Activated CD4-positive, alpha-beta memory T cell treated with anti-CD3 and anti-CD28 coated beads for 36 hours (primary cell): ENCODE measurements at regions of chr22 and their contacts with region 1.

Region 1: DNA sequence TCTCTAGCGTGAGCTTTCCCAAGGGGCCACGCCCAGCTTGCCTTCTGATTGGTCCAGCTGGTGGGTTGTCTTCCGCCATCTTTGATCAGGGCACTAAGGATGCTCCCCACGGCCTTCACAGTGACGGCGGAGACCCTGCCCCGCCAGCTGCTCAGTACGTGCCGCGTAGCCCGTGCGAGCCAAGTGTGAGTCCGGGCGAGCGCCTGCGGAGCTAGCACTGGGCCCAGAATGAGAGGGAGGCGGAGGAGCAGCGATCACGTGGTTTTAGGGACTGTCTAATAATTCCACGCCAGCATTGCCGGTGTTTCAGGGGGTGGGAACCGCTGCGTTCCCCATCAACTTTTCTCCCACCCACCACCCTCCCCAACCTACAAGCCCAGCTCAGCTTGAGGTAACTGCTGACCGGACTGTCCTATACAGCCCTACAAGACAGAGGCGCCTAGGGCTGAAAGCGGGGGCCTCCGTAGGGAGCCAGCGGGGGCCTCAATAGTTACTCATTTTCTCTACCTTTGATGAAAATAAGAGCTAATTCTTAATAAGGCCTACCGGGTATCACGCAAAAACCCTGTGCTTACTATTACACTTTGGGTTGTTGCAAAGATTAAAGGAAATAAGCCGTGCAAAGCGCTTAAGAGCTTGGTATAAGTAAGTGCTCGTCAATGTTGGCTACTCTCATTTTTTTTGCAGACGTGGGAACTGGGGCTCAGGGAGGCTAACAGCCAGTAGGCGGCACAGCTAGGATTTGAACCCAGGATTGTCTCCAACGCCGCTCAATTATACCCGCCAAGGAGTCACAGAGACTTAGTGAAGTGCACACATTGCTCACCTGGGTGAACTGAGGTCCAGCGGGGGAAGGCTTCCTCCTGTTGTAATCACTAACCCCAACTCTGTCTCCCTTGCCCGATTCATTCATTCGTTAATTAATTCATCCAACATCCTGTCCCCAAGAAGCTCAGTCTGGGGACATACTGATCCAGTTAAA is 1.3 kb upstream of the MTFP1 start:
- DNase-seq: peak; percentile 99
- H3K4me3 Mint-ChIP-seq: peak overlapping the region; percentile 90
- H3K27ac Mint-ChIP-seq: peak overlapping the region; percentile 95
- H3K4me1 Mint-ChIP-seq: peaks cover 58% of the 10 kb centered on the region
- H3K27me3 Mint-ChIP-seq: no peaks in the 10 kb centered on the region

Region 2: GRCh38 chr22:30159561-30160353 is 264.5 kb before region 1 on chr22:
- CTCF ChIA-PET with region 1: no interaction called
- POLR2A ChIA-PET with region 1: no interaction called
- intact Hi-C with region 1: loop called (anchors 10 kb)
- DNase-seq: no peak
- H3K4me3 Mint-ChIP-seq: no peak overlapping the region
- H3K27ac Mint-ChIP-seq: peak overlapping the region; percentile 85
- H3K4me1 Mint-ChIP-seq: peaks cover 58% of the 10 kb centered on the region
- H3K27me3 Mint-ChIP-seq: no peaks in the 10 kb centered on the region

Region 3: GRCh38 chr22:30348809-30349208 is 75.5 kb before region 1 on chr22:
- CTCF ChIA-PET with region 1: interaction called, 3 read pairs
- POLR2A ChIA-PET with region 1: interaction called, 4 read pairs
- intact Hi-C with region 1: loop called (anchors 5 kb)
- DNase-seq: no peak
- H3K4me3 Mint-ChIP-seq: peak overlapping the region; percentile 44
- H3K27ac Mint-ChIP-seq: peak overlapping the region; percentile 89
- H3K4me1 Mint-ChIP-seq: peaks cover 89% of the 10 kb centered on the region
- H3K27me3 Mint-ChIP-seq: no peaks in the 10 kb centered on the region

Region 4: DNA sequence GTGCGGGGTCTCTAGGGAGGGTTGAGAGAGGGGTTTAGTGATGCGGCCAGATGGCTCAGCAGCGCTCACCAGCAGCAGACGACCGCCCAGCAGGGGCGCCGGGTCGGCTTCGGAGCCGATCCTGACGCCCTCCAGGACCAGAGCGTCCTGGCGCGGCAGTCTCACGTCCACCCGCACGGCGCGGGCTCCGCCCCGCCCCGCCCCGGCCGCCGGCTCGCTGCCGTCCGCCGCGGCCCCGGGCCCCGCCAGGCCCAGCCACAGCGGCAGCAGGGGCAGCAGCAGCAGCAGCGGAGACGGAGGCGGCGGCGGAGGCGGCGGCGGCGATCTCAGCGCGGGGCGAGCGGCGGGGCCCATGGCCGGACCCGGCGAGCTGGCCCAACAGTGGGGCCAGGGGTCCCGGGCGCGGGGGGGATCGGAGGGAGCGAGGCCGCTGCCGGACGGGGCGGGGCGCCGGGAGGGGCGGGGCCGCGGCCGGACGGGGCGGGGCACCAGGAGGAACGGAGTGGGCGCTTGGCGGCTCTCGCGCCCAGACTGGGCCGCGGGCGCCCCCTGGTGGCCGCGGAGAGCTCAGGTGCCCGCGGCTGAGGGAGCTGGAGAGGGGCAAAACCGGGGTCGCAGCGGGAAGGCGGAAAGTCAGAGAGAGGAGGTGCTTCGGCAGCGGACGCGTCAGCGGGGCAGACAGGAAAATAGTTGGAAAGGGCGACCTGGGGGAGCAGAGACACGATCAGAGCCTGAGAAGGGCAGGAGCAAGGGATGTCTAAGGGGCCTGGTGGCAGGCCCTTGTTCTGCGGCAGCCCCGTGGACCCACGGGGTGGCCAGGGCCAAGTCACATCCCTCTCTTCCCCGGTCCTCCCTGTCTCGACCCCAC is 37.1 kb before region 1 on chr22 and contains the start of gene RNF215:
- CTCF ChIA-PET with region 1: interaction called, 113 read pairs
- POLR2A ChIA-PET with region 1: interaction called, 10 read pairs
- intact Hi-C with region 1: loop called (anchors 1 kb)
- DNase-seq: peak; percentile 84
- H3K4me3 Mint-ChIP-seq: peak within 1 kb of the TSS; percentile 80
- H3K27ac Mint-ChIP-seq: peak within 1 kb of the TSS; percentile 39
- H3K4me1 Mint-ChIP-seq: peaks cover 24% of the 10 kb centered on the region
- H3K27me3 Mint-ChIP-seq: peaks cover 1% of the 10 kb centered on the region
- total RNA-seq, gene RNF215: 8.8 to 10.2 TPM

Region 5: DNA sequence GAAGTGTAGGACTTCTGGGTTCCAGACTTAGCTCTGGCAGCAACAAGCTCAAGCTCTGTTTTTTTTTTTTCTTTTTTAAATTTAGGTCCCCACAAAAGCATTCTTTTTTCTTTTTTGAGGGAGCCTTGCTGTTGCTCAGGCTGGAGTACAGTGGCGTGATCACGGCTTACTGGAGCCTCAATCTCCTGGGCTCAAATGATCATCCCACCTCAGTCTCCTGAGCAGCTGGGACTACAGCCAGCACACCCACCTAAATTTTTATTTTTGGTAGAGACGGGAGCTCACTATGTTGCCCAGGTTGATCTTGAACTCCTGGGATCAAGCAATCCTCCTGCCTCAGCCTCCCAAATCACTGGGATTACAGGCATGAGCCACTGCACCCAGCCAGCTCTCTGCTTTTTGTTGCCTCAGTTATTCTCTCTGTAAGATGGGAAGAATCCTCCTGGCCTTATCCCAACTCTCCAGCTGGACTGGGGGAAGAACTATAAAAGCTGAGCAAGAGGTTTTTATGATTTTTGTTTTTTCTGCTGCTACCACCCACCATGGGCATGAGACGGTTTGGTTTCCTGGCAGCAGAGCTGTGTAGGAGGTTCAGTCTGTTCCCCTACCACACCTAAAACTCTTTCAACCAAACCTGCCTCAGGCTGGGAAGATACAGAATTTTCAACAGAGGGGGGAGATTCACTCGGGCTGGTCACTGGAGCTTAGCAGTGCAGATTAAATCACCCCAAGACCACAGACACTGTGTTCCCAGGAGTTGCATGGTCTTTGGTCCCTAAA is 10.3 kb before region 1 on chr22:
- CTCF ChIA-PET with region 1: interaction called, 11 read pairs
- POLR2A ChIA-PET with region 1: interaction called, 19 read pairs
- intact Hi-C with region 1: no loop called
- DNase-seq: peak; percentile 31
- H3K4me3 Mint-ChIP-seq: no peak overlapping the region
- H3K27ac Mint-ChIP-seq: peak overlapping the region; percentile 70
- H3K4me1 Mint-ChIP-seq: peaks cover 23% of the 10 kb centered on the region
- H3K27me3 Mint-ChIP-seq: no peaks in the 10 kb centered on the region

Region 6: GRCh38 chr22:30444632-30445437 is 20.6 kb after region 1 on chr22:
- CTCF ChIA-PET with region 1: interaction called, 13 read pairs
- POLR2A ChIA-PET with region 1: interaction called, 3 read pairs
- intact Hi-C with region 1: no loop called
- DNase-seq: peak; percentile 78
- H3K4me3 Mint-ChIP-seq: no peak overlapping the region
- H3K27ac Mint-ChIP-seq: no peak overlapping the region
- H3K4me1 Mint-ChIP-seq: peaks cover 19% of the 10 kb centered on the region
- H3K27me3 Mint-ChIP-seq: peaks cover 33% of the 10 kb centered on the region